IMR-90 (cell line): ENCODE measurements at regions of chr14 and their contacts with region 1.

Region 1: GRCh38 chr14:94001501-94002396 is 4.6 kb downstream of the CCDC197 start:
- DNase-seq: peak; percentile 67
- ATAC-seq: peak; percentile 99
- H3K4me3 ChIP-seq: no peak overlapping the region
- H3K27ac ChIP-seq: no peak overlapping the region
- H3K4me1 ChIP-seq: no peaks in the 10 kb centered on the region
- H3K27me3 ChIP-seq: peaks cover 25% of the 10 kb centered on the region
- CTCF ChIP-seq: peak; percentile 98
- POLR2A ChIP-seq: no peak
- RAD21 ChIP-seq: peak; percentile 98

Region 2: DNA sequence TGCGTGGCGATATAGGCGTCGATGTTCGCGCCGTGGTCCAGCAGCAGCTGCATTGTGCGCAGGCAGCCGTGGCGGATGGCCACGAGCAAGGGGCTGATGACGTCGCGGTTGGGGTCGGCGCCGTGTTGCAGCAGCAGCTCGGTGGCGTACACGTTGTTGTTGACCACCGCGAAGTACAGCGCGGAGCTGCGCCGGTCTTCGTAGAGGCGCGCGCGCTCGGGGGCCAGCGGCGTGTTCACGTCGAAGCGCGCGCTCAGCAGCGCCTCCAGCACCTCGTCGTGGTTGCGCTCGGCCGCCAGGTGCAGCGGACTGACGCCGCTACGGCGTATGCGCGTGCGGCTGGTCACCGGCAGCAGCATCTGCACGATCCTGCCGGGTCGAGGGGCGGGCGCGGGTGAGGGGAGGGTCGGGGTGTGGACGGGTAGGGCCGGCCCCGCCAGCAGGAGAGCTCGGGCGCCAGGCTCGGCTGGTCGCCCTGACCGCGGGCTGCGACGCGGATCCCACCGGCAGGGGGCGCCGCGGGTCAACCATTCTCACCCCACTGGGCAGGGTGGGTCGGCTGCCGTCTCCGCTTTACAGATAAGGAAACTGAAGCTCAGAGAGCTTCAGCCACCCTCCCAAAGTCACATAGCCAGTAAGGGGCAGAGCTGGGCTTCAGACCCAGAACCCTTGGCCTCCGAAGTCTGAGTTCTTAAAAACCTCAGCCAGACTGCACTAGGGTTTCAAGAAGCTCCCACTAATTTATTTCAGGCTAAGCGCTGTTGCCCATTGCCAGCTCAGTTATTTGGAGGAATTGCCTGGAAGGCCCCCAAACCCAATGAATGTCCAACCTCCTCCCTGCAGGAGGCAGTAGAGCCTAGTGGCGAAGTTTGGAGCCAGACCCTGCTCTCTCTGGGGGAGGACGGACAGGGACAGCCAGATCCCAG is 62.2 kb before region 1 on chr14:
- CTCF ChIA-PET with region 1: interaction called, 50 read pairs
- POLR2A ChIA-PET with region 1: no interaction called
- dilution Hi-C with region 1: no loop called
- in situ Hi-C with region 1: loop called (anchors 5 kb)
- intact Hi-C with region 1: loop called (anchors 1 kb)
- DNase-seq: peak; percentile 67
- ATAC-seq: peak; percentile 90
- H3K4me3 ChIP-seq: peak overlapping the region; percentile 39
- H3K27ac ChIP-seq: no peak overlapping the region
- H3K4me1 ChIP-seq: peaks cover 7% of the 10 kb centered on the region
- H3K27me3 ChIP-seq: peaks cover 31% of the 10 kb centered on the region; the same call in 1 of the 2 replicates
- CTCF ChIP-seq: peak; percentile 98
- POLR2A ChIP-seq: peak; percentile 51; the same call in 1 of the 2 replicates
- RAD21 ChIP-seq: peak; percentile 94

Region 3: GRCh38 chr14:93959239-93960107 is 42.3 kb before region 1 on chr14:
- CTCF ChIA-PET with region 1: no interaction called
- POLR2A ChIA-PET with region 1: no interaction called
- dilution Hi-C with region 1: no loop called
- in situ Hi-C with region 1: no loop called
- intact Hi-C with region 1: loop called (anchors 5 kb)
- DNase-seq: peak; percentile 95
- ATAC-seq: peak; percentile 81
- H3K4me3 ChIP-seq: no peak overlapping the region
- H3K27ac ChIP-seq: peak overlapping the region; percentile 41; the same call in 1 of the 2 replicates
- H3K4me1 ChIP-seq: peaks cover 25% of the 10 kb centered on the region
- H3K27me3 ChIP-seq: no peaks in the 10 kb centered on the region; the same call in 1 of the 2 replicates
- CTCF ChIP-seq: no peak
- POLR2A ChIP-seq: peak; percentile 69
- RAD21 ChIP-seq: no peak